GM12878 (cell line): ENCODE measurements at regions of chr20 and their contacts with region 1.

Region 1: DNA sequence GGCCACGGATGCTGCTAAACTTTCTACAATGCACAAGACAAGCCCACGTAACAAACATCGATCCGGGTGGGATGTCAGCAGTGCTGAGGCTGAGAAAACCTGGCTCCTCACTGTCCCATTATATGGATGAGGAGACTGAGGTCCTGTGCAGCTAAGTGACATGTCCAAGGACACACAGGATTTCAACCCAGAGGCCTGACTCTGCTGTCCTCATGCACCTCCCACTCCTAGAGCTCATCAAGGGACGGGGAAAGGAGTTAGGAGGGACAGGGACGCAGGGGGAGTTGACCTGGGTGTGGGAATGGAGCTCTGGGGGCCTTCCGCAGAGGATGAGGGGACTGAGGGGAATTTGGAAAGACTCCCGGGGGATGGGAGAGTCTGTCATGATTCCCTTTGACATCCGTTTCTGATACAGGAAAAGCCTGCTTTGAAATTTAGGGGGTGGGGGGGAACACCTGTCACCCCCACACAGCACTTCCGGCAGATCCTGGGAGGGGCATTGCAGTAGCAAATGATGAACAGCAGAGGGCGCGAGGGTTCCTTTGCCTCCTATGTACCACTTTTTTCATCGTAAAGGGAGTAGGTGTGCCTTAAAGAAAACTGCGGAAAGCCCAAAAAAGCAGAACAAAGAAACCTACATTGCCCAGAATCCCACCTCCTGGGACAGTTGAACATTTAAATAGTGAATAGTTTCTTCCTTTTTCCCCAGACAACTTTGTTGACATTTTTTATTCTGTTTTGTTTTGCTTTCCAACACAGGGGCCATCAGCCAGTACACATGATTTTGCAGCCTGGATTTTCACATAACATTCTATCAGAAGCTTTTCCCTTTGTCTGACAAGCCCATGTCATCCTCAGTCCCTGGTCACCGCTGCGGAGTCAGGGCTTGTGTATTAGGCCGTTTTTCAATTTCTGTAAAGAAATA is 48.6 kb downstream of the SLC2A10 start:
- DNase-seq: peak; percentile 30
- ATAC-seq: peak; percentile 73
- H3K4me3 ChIP-seq: no peak overlapping the region
- H3K27ac ChIP-seq: no peak overlapping the region
- H3K4me1 ChIP-seq: no peaks in the 10 kb centered on the region
- H3K27me3 ChIP-seq: no peaks in the 10 kb centered on the region; a peak in 1 of 4 replicates
- CTCF ChIP-seq: peak; percentile 91 to 94 (median 91)
- EP300 ChIP-seq: no peak
- POLR2A ChIP-seq: no peak
- RAD21 ChIP-seq: peak; percentile 68

Region 2: GRCh38 chr20:47196091-47197081 is 438.4 kb after region 1 on chr20:
- CTCF ChIA-PET with region 1: no interaction called
- POLR2A ChIA-PET with region 1: no interaction called
- RAD21 ChIA-PET with region 1: interaction called, 6 read pairs
- SMC1A ChIA-PET with region 1: interaction called, 3 read pairs
- in situ Hi-C with region 1: no loop called
- intact Hi-C with region 1: loop called (anchors 10 kb)
- DNase-seq: peak; percentile 19
- ATAC-seq: peak; percentile 86
- H3K4me3 ChIP-seq: no peak overlapping the region
- H3K27ac ChIP-seq: no peak overlapping the region
- H3K4me1 ChIP-seq: peaks cover 17% of the 10 kb centered on the region
- H3K27me3 ChIP-seq: peaks cover 0 to 1% of the 10 kb centered on the region in 2 experiments; a peak in 1 of 4 replicates
- CTCF ChIP-seq: peak; percentile 91 to 97 (median 95)
- EP300 ChIP-seq: no peak
- POLR2A ChIP-seq: no peak
- RAD21 ChIP-seq: peak; percentile 95